CD8-positive, alpha-beta T cell (primary cell): ENCODE measurements at regions of chr5 and their contacts with region 1.

Region 1: DNA sequence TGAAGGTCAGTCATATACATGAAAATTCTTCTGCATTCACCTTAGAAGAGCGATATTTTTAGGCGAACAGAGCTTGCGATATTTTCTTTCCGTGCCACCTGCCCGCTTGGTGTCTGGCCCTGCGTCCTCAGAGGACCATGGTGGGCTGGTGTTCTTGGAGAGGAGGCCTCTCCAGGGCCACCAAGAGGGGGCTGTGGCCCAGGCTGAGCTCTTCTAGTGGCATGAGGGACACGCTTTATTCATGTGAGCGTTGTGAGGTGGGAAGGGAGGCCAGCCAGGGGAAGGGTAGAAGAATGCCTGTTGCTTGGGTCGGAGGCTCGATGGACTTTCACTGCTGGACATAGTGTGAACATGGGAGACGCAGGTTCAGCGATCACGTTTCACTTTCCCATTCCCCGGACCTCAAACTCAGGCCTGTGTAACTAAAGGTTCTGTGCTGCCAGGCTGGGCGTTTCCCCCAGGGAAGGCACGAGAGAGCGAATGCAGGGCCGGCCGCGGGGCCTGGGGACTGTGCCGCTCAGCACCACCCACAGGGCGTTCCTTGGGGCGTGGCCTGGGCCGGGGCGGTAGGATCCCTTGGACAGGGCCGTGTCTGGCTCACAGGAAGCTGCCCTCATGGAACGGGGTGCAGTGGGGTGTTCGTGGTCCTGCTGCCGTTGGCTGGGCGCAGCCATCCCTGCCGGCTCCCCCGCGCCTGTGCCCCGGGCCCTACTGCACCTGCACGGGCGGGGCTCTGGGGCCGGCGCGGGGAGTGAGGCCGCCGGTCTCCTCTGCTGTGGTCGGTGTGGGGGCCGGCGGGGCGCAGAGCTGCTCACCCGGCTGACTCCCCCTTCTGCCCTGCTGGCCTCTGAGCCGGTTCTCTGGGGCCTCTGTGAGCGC is 40.7 kb upstream of the CLPTM1L start:
- DNase-seq: peak; percentile 73 to 93 (median 88)
- ATAC-seq: peak; percentile 77
- H3K4me3 ChIP-seq: peak overlapping the region; percentile 66 to 73
- H3K4me3 Mint-ChIP-seq: peak overlapping the region; percentile 97
- H3K27ac ChIP-seq: peak overlapping the region; percentile 94 to 96
- H3K27ac Mint-ChIP-seq: peak overlapping the region; percentile 100
- H3K4me1 ChIP-seq: peaks cover 17% of the 10 kb centered on the region
- H3K4me1 Mint-ChIP-seq: peaks cover 30% of the 10 kb centered on the region
- H3K27me3 ChIP-seq: no peaks in the 10 kb centered on the region
- H3K27me3 Mint-ChIP-seq: no peaks in the 10 kb centered on the region
- CTCF ChIP-seq: no peak

Region 2: GRCh38 chr5:1105350-1106265 is 280.0 kb before region 1 on chr5:
- CTCF ChIA-PET with region 1: interaction called, 3 read pairs
- POLR2A ChIA-PET with region 1: no interaction called
- intact Hi-C with region 1: loop called in 1 of 2 experiments (anchors 10 kb)
- DNase-seq: peak in 8 of 9 experiments; percentile 26 to 89 (median 76)
- ATAC-seq: peak; percentile 73
- H3K4me3 ChIP-seq: peak overlapping the region; percentile 41 to 79
- H3K4me3 Mint-ChIP-seq: peak overlapping the region; percentile 78
- H3K27ac ChIP-seq: peak overlapping the region; percentile 31 to 82
- H3K27ac Mint-ChIP-seq: peak overlapping the region; percentile 97
- H3K4me1 ChIP-seq: peaks cover 99% of the 10 kb centered on the region
- H3K4me1 Mint-ChIP-seq: peaks cover 79% of the 10 kb centered on the region
- H3K27me3 ChIP-seq: no peaks in the 10 kb centered on the region
- H3K27me3 Mint-ChIP-seq: no peaks in the 10 kb centered on the region
- CTCF ChIP-seq: no peak

Region 3: GRCh38 chr5:1255081-1255561 is 130.5 kb before region 1 on chr5:
- CTCF ChIA-PET with region 1: no interaction called
- POLR2A ChIA-PET with region 1: no interaction called
- intact Hi-C with region 1: no loop called
- DNase-seq: peak in 8 of 9 experiments; percentile 31 to 75 (median 58)
- ATAC-seq: peak; percentile 91
- H3K4me3 ChIP-seq: peak overlapping the region in 1 of 2 experiments; percentile 17
- H3K4me3 Mint-ChIP-seq: peak overlapping the region; percentile 75
- H3K27ac ChIP-seq: no peak overlapping the region
- H3K27ac Mint-ChIP-seq: peak overlapping the region; percentile 25
- H3K4me1 ChIP-seq: peaks cover 18% of the 10 kb centered on the region
- H3K4me1 Mint-ChIP-seq: peaks cover 18% of the 10 kb centered on the region
- H3K27me3 ChIP-seq: no peaks in the 10 kb centered on the region
- H3K27me3 Mint-ChIP-seq: no peaks in the 10 kb centered on the region
- CTCF ChIP-seq: no peak

Region 4: GRCh38 chr5:1315709-1316587 is 69.7 kb before region 1 on chr5:
- CTCF ChIA-PET with region 1: interaction called, 3 read pairs
- POLR2A ChIA-PET with region 1: interaction called, 14 read pairs
- intact Hi-C with region 1: no loop called
- DNase-seq: peak in 8 of 9 experiments; percentile 34 to 83 (median 70)
- ATAC-seq: peak; percentile 65
- H3K4me3 ChIP-seq: peak overlapping the region; percentile 40 to 54
- H3K4me3 Mint-ChIP-seq: peak overlapping the region; percentile 82
- H3K27ac ChIP-seq: peak overlapping the region; percentile 45
- H3K27ac Mint-ChIP-seq: peak overlapping the region; percentile 94
- H3K4me1 ChIP-seq: peaks cover 58% of the 10 kb centered on the region
- H3K4me1 Mint-ChIP-seq: peaks cover 61% of the 10 kb centered on the region
- H3K27me3 ChIP-seq: no peaks in the 10 kb centered on the region
- H3K27me3 Mint-ChIP-seq: no peaks in the 10 kb centered on the region
- CTCF ChIP-seq: no peak

Region 5: DNA sequence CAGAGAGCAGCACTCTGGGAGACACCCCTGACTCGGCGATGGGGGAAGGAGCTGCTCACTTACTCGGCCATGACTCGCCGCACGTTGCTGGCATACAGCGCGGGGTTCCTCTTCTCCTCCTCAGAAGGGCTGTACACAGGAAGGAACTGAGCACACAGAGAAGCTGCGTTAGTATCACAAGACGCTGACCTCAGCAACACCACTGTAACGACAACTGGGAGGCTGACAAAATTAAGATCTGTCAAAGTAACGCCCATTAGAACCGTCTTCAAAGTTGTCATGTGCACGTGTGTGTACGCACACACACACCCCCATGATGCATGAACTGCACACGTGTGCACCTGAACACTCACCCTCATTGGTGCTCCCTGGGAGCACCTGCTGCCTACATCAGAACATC is 91.7 kb after region 1 on chr5:
- CTCF ChIA-PET with region 1: no interaction called
- POLR2A ChIA-PET with region 1: no interaction called
- intact Hi-C with region 1: no loop called
- DNase-seq: no peak
- ATAC-seq: no peak
- H3K4me3 ChIP-seq: no peak overlapping the region
- H3K4me3 Mint-ChIP-seq: no peak overlapping the region
- H3K27ac ChIP-seq: no peak overlapping the region
- H3K27ac Mint-ChIP-seq: no peak overlapping the region
- H3K4me1 ChIP-seq: peaks cover 4% of the 10 kb centered on the region
- H3K4me1 Mint-ChIP-seq: peaks cover 8% of the 10 kb centered on the region
- H3K27me3 ChIP-seq: no peaks in the 10 kb centered on the region
- H3K27me3 Mint-ChIP-seq: no peaks in the 10 kb centered on the region
- CTCF ChIP-seq: no peak

Region 6: DNA sequence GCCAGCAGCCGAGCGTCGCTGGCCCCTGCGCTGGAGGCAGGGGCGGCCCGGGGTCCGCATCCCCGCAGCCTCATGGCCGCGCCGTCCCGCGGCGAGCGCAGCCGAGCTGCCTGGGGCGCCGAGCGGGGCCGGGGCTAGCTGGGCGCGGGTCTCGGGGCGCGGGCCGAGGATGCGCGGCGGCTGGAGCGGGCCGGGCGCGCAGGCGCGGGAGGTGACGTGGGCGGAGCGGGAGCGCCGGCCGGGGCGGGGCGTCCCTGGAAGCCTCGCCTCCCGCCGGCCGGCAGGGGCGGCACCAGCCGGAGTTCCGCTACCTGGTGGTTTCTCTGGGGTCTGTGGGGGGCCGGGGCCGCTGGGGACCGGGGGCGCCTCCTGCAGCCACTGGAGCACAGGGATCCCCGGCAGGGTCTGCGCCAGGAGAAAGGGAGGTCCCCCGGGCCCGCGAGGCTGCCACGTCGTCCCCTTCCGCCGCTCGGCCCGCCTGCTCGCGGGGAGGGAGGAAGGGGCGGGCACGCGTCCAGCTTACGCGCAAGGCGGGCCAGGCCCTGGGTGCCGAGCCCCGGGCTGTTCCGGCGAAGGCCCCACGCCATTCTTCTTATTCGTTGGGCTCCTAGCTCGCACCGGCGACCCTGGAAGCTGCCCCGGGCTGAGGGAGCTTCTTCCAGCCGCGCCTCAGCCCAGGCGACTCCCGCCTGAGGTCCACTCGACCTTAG is 138.3 kb after region 1 on chr5 and contains the start of gene LPCAT1:
- CTCF ChIA-PET with region 1: interaction called, 5 read pairs
- POLR2A ChIA-PET with region 1: interaction called, 11 read pairs
- intact Hi-C with region 1: loop called in 1 of 2 experiments (anchors 1 kb)
- DNase-seq: peak; percentile 49 to 88 (median 73)
- ATAC-seq: peak; percentile 84
- H3K4me3 ChIP-seq: peak within 1 kb of the TSS; percentile 57 to 66
- H3K4me3 Mint-ChIP-seq: peak within 1 kb of the TSS; percentile 81
- H3K27ac ChIP-seq: peak within 1 kb of the TSS; percentile 52 to 78
- H3K27ac Mint-ChIP-seq: peak within 1 kb of the TSS; percentile 82
- H3K4me1 ChIP-seq: peaks cover 33% of the 10 kb centered on the region
- H3K4me1 Mint-ChIP-seq: peaks cover 24% of the 10 kb centered on the region
- H3K27me3 ChIP-seq: no peaks in the 10 kb centered on the region
- H3K27me3 Mint-ChIP-seq: no peaks in the 10 kb centered on the region
- CTCF ChIP-seq: no peak
- total RNA-seq, gene LPCAT1: 28.8 to 29.1 TPM

Region 7: DNA sequence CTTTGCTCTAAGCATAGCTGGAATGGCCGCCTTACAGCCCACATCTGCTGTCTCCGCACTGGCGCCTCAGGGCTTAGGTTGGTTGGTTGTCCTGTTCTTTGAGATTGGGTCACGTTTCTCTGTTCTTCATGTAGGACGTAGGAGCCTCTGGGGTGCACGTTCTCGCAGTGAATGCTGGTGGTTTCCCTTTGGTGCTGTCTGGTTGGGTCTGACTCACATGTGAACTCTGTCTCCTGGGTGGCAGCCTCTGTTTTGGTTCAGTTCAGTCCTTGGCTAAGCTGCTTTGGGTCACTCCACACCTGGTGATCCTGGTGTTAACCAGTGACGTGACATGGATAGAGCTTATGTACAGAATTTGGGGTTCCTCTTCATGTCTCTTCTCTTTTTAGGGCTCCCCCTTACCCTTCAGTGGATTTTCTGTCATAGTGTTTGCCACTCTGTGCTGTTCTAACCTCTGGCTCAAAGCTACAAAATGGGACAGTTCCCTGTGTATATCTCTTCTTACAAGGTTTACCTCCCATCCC is 150.8 kb after region 1 on chr5:
- CTCF ChIA-PET with region 1: no interaction called
- POLR2A ChIA-PET with region 1: interaction called, 8 read pairs
- intact Hi-C with region 1: loop called (anchors 5 kb)
- DNase-seq: peak; percentile 47 to 94 (median 71)
- ATAC-seq: peak; percentile 96
- H3K4me3 ChIP-seq: peak overlapping the region; percentile 35
- H3K4me3 Mint-ChIP-seq: peak overlapping the region; percentile 72
- H3K27ac ChIP-seq: peak overlapping the region; percentile 64 to 93
- H3K27ac Mint-ChIP-seq: peak overlapping the region; percentile 93
- H3K4me1 ChIP-seq: peaks cover 26% of the 10 kb centered on the region
- H3K4me1 Mint-ChIP-seq: peaks cover 24% of the 10 kb centered on the region
- H3K27me3 ChIP-seq: no peaks in the 10 kb centered on the region
- H3K27me3 Mint-ChIP-seq: no peaks in the 10 kb centered on the region
- CTCF ChIP-seq: no peak

Region 8: DNA sequence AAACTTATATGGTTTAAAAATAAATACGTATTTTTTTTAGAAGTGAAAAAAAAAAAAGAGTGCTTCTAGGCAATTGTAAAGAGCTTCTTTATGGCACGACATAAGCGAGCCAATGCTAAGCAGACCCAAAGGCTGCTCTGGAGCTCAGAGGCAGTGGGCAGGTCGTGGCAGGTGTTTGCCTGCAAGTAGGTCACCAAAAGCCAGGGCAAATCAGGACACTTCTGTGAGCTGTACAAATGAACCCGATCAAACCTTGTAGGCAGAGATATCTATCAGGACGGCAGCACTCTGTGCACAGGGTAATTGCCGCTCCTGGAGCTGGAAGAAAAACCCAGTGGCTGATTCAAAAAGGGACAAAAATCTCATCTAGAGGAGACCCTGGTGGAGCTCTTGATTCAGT is 1289.9 kb after region 1 on chr5:
- CTCF ChIA-PET with region 1: no interaction called
- POLR2A ChIA-PET with region 1: no interaction called
- intact Hi-C with region 1: no loop called
- DNase-seq: no peak
- ATAC-seq: no peak
- H3K4me3 ChIP-seq: no peak overlapping the region
- H3K4me3 Mint-ChIP-seq: no peak overlapping the region
- H3K27ac ChIP-seq: no peak overlapping the region
- H3K27ac Mint-ChIP-seq: no peak overlapping the region
- H3K4me1 ChIP-seq: no peaks in the 10 kb centered on the region
- H3K4me1 Mint-ChIP-seq: no peaks in the 10 kb centered on the region
- H3K27me3 ChIP-seq: no peaks in the 10 kb centered on the region
- H3K27me3 Mint-ChIP-seq: no peaks in the 10 kb centered on the region
- CTCF ChIP-seq: no peak